ENCODE measurements at regions of chr19 and their contacts with region 1.

Region 1: DNA sequence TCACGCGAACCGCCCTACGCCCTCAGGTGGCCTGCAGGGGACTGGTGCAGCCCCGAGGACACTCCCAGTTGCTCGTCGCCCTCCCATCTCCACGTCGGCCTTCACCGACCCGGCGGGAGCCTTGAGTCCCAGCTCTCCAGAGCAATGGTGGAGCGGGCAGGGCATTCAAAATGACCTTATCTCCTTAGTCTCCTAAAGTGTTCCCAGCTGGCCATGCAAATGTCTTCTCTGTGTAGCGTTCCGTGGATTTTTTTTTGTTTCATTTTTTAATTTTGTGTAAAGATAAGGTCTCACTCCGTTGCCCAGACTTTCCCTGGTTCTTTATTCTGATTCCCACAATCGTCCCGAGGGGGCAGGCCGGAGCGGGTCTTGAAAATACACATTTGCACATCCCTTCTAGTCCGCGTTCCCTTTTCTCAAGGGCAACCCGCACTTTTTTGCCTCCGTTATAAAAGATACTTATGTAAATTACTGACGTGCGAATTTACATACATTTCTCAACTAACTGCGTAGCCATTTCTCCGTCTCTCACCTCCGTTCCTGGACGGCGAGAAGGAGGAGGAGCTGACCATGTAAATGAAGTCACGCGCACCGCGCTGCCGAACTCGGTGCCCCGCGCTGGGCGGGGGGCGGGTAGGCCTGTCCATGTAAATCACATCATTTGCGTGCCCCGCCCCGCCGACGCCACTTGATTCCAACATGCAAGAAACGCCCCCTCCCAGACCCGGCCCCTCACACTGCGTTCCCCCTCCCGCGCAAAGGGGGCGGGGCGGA is 581 bp upstream of the EGLN2 start:
- DNase-seq: peak; percentile 48 to 100 (median 100)
- ATAC-seq: peak; percentile 92
- H3K4me3 ChIP-seq: peak overlapping the region; percentile 77
- H3K4me3 Mint-ChIP-seq: peak overlapping the region; percentile 89 to 100 (median 95)
- H3K27ac ChIP-seq: peak overlapping the region; percentile 90
- H3K27ac Mint-ChIP-seq: peak overlapping the region; percentile 96 to 100 (median 99)
- H3K4me1 ChIP-seq: peaks cover 35 to 39% of the 10 kb centered on the region in 2 donors
- H3K4me1 Mint-ChIP-seq: peaks cover 28 to 56% (median 48%) of the 10 kb centered on the region in 7 donors
- H3K27me3 ChIP-seq: no peaks in the 10 kb centered on the region
- H3K27me3 Mint-ChIP-seq: no peaks in the 10 kb centered on the region

Region 2: GRCh38 chr19:40128991-40129390 is 669.4 kb before region 1 on chr19:
- CTCF ChIA-PET with region 1: no interaction called
- POLR2A ChIA-PET with region 1: no interaction called
- intact Hi-C with region 1: no loop called
- DNase-seq: no peak
- ATAC-seq: no peak
- H3K4me3 ChIP-seq: no peak overlapping the region
- H3K4me3 Mint-ChIP-seq: no peak overlapping the region
- H3K27ac ChIP-seq: no peak overlapping the region
- H3K27ac Mint-ChIP-seq: no peak overlapping the region
- H3K4me1 ChIP-seq: no peaks in the 10 kb centered on the region
- H3K4me1 Mint-ChIP-seq: no peaks in the 10 kb centered on the region
- H3K27me3 ChIP-seq: peaks cover 0 to 2% of the 10 kb centered on the region in 2 donors
- H3K27me3 Mint-ChIP-seq: peaks cover 40 to 60% (median 45%) of the 10 kb centered on the region in 5 donors

Region 3: GRCh38 chr19:40425450-40426287 is 372.7 kb before region 1 on chr19 and contains the start of gene SERTAD1:
- CTCF ChIA-PET with region 1: no interaction called
- POLR2A ChIA-PET with region 1: no interaction called
- intact Hi-C with region 1: loop called in 1 of 2 experiments (anchors 5 kb)
- DNase-seq: peak; percentile 99 to 100 (median 100)
- ATAC-seq: peak; percentile 96
- H3K4me3 ChIP-seq: peak within 1 kb of the TSS; percentile 77
- H3K4me3 Mint-ChIP-seq: peak within 1 kb of the TSS; percentile 90 to 99 (median 96)
- H3K27ac ChIP-seq: peak within 1 kb of the TSS; percentile 87
- H3K27ac Mint-ChIP-seq: peak within 1 kb of the TSS; percentile 92 to 100 (median 98)
- H3K4me1 ChIP-seq: peaks cover 15 to 18% of the 10 kb centered on the region in 2 donors
- H3K4me1 Mint-ChIP-seq: peaks cover 12 to 38% (median 24%) of the 10 kb centered on the region in 7 donors
- H3K27me3 ChIP-seq: no peaks in the 10 kb centered on the region
- H3K27me3 Mint-ChIP-seq: peaks cover 0 to 2% (median 0%) of the 10 kb centered on the region in 5 donors
- total RNA-seq, gene SERTAD1: 8.1 to 30.9 (median 13.5) TPM

Region 4: GRCh38 chr19:40777937-40778705 is 20.3 kb before region 1 on chr19 and contains the start of gene RAB4B:
- CTCF ChIA-PET with region 1: interaction called, 21 read pairs
- POLR2A ChIA-PET with region 1: interaction called, 89 read pairs
- intact Hi-C with region 1: loop called (anchors 1 kb)
- DNase-seq: peak; percentile 99 to 100 (median 100)
- ATAC-seq: peak; percentile 92
- H3K4me3 ChIP-seq: peak within 1 kb of the TSS; percentile 97
- H3K4me3 Mint-ChIP-seq: peak within 1 kb of the TSS; percentile 91 to 99 (median 96)
- H3K27ac ChIP-seq: peak within 1 kb of the TSS; percentile 92
- H3K27ac Mint-ChIP-seq: peak within 1 kb of the TSS; percentile 87 to 99 (median 98)
- H3K4me1 ChIP-seq: peaks cover 18 to 24% of the 10 kb centered on the region in 2 donors
- H3K4me1 Mint-ChIP-seq: peaks cover 31 to 49% (median 39%) of the 10 kb centered on the region in 7 donors
- H3K27me3 ChIP-seq: no peaks in the 10 kb centered on the region
- H3K27me3 Mint-ChIP-seq: no peaks in the 10 kb centered on the region
- total RNA-seq, gene RAB4B: 37.6 to 63.0 (median 52.5) TPM

Region 5: DNA sequence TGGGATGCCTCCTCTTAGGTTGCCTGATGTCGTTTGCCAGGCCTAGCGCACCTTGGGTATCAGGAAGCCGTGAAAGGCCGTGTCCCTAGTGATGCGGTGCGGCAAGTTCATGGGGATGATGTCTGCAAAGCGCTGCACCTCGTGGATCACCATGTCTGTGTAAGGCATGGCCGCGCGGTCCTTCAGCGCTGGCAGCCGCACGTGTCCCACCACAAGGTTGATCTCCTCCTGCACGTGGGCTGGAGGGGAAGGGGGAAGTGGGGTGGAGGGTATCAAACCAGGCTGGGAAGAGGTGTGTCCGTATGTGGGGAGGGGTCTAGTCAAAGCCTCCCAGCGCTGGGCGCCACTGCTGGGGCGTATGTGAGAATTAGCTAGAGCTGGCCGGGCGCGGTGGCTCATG is 23.8 kb after region 1 on chr19:
- CTCF ChIA-PET with region 1: interaction called, 4 read pairs
- POLR2A ChIA-PET with region 1: interaction called, 10 read pairs
- intact Hi-C with region 1: loop called in 1 of 2 experiments (anchors 1 kb)
- DNase-seq: no peak
- ATAC-seq: no peak
- H3K4me3 ChIP-seq: no peak overlapping the region
- H3K4me3 Mint-ChIP-seq: no peak overlapping the region
- H3K27ac ChIP-seq: no peak overlapping the region
- H3K27ac Mint-ChIP-seq: peak overlapping the region in 3 of 9 donors; percentile 51 to 78 (median 62)
- H3K4me1 ChIP-seq: peaks cover 16 to 27% of the 10 kb centered on the region in 2 donors
- H3K4me1 Mint-ChIP-seq: peaks cover 36 to 58% (median 44%) of the 10 kb centered on the region in 7 donors
- H3K27me3 ChIP-seq: no peaks in the 10 kb centered on the region
- H3K27me3 Mint-ChIP-seq: no peaks in the 10 kb centered on the region

Region 6: GRCh38 chr19:40908976-40909375 is 110.6 kb after region 1 on chr19:
- CTCF ChIA-PET with region 1: no interaction called
- POLR2A ChIA-PET with region 1: no interaction called
- intact Hi-C with region 1: loop called in 1 of 2 experiments (anchors 1 kb)
- DNase-seq: peak in 5 of 9 donors; percentile 31 to 64 (median 43)
- ATAC-seq: no peak
- H3K4me3 ChIP-seq: peak overlapping the region; percentile 60
- H3K4me3 Mint-ChIP-seq: peak overlapping the region in 9 of 10 donors; percentile 68 to 89 (median 83)
- H3K27ac ChIP-seq: no peak overlapping the region
- H3K27ac Mint-ChIP-seq: peak overlapping the region in 5 of 9 donors; percentile 46 to 95 (median 87)
- H3K4me1 ChIP-seq: peaks cover 0 to 10% of the 10 kb centered on the region in 2 donors
- H3K4me1 Mint-ChIP-seq: peaks cover 4 to 16% (median 11%) of the 10 kb centered on the region in 7 donors
- H3K27me3 ChIP-seq: no peaks in the 10 kb centered on the region
- H3K27me3 Mint-ChIP-seq: peaks cover 7 to 32% (median 13%) of the 10 kb centered on the region in 5 donors